Ovary (tissue), 10 donors: ENCODE measurements at regions of chr14 and their contacts with region 1.

Region 1: DNA sequence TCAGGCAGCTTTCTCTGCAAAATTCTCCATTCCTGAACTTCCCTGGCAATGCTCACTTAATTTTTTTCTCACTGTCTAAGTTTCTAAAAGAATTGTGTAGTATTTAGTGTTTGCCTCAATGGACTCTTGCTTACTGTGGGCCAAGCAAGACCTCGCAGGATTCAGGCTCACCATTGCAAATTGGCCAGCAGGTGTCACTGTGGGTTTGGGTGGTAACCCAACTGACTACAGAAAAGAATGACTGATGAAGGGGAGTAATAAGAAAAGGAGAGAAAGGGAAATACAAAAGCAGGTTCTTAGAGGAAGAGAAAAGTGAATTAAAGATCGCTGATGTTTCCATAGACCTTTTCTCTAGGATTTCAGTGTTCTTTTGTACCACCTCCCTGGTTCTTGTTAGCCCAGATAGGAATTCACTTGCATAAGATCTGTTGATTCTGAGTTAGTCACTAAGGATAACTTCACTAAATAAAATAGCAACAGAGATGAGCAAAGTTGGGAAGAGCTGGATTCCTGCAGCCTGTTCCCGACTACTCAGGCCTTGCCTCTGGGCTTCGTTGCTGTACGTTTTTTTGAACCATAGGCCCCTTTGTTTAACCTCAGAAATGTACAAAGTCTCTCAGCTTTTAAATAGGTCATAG is 386.5 kb upstream of the DDHD1 start:
- DNase-seq: peak; percentile 51 to 81 (median 75)
- H3K4me3 ChIP-seq: no peak overlapping the region
- H3K27ac ChIP-seq: no peak overlapping the region
- H3K4me1 ChIP-seq: peaks cover 4% of the 10 kb centered on the region
- H3K27me3 ChIP-seq: no peaks in the 10 kb centered on the region
- CTCF ChIP-seq: peak; percentile 37 to 59 (median 45)
- EP300 ChIP-seq: no peak
- POLR2A ChIP-seq: no peak

Region 2: GRCh38 chr14:53613404-53614253 is 74.0 kb after region 1 on chr14:
- intact Hi-C with region 1: no loop called
- DNase-seq: no peak
- H3K4me3 ChIP-seq: no peak overlapping the region
- H3K27ac ChIP-seq: no peak overlapping the region
- H3K4me1 ChIP-seq: no peaks in the 10 kb centered on the region
- H3K27me3 ChIP-seq: no peaks in the 10 kb centered on the region
- CTCF ChIP-seq: no peak
- EP300 ChIP-seq: no peak
- POLR2A ChIP-seq: no peak

Region 3: DNA sequence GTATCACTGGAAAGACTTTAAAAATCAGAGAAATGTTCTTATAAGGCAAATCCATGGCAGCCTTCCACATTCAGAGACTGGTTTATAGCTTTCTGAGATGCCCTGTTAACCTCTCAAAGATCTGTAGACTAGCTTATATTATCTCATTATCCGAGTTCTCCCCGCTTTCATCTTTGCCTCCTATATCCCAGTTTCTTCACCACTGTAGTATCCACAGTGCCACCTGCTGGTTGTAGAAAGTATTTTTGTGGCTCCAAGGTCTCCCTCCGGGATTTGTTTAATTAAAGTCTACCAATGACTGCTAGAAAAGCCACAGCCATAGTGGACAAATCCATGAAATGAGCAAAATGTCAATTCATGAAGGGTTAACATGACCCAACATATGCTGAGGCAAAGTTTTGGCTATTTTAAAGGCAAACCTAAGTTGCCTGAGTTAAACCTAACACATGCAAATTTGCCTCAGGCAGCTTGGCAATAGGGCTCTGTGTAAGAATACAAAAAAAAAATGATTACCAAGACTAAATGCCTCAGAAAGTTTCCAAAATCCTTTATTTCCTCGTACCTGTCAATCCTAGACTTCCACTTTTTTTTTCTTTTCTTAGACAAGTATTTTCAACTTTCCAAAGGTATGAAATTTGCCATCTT is 635.8 kb after region 1 on chr14:
- intact Hi-C with region 1: loop called in 3 of 4 experiments (anchors 5 to 10 kb)
- DNase-seq: peak; percentile 42 to 71 (median 46)
- H3K4me3 ChIP-seq: no peak overlapping the region
- H3K27ac ChIP-seq: no peak overlapping the region
- H3K4me1 ChIP-seq: no peaks in the 10 kb centered on the region
- H3K27me3 ChIP-seq: no peaks in the 10 kb centered on the region
- CTCF ChIP-seq: peak; percentile 66 to 79 (median 76)
- EP300 ChIP-seq: no peak
- POLR2A ChIP-seq: no peak

Region 4: DNA sequence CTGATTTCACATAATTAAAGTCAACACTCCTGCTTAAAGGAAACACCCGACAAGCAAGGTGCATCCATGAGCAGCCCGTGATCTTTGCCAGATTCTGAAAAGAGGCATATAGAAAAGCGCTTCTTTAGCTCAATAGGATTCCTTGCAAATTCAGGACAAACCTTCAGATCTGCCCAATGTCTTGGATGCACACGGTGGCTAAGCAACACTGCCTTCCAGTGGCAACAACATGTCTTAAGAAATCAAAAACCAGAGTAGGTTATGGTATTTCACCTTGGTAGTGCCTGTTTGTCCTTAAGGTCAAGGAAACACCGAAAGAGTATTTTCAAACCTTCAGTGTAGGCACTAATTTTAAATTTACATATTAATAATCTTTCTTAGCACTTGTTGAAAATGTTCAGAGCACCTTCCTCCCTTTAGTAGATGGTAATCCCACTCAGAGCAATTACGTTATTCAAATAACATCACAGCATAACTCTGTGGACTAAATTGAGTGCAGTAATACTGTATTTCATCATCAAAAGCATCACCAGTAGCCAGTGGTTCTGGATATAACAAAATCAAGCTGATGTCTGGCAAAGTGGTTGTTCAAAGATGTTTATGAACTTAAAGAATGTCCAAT is 799.2 kb after region 1 on chr14:
- intact Hi-C with region 1: loop called in 1 of 4 experiments (anchors 10 kb)
- DNase-seq: no peak
- H3K4me3 ChIP-seq: no peak overlapping the region
- H3K27ac ChIP-seq: no peak overlapping the region
- H3K4me1 ChIP-seq: no peaks in the 10 kb centered on the region
- H3K27me3 ChIP-seq: no peaks in the 10 kb centered on the region
- CTCF ChIP-seq: no peak
- EP300 ChIP-seq: no peak
- POLR2A ChIP-seq: no peak